Activated CD8-positive, alpha-beta T cell treated with anti-CD3 and anti-CD28 coated beads for 36 hours (primary cell): ENCODE measurements at regions of chr6 and their contacts with region 1.

Region 1: GRCh38 chr6:722077-722524 is 29.2 kb upstream of the EXOC2 start:
- DNase-seq: peak; percentile 88
- ATAC-seq: peak; percentile 86
- H3K4me3 Mint-ChIP-seq: no peak overlapping the region
- H3K27ac Mint-ChIP-seq: no peak overlapping the region
- H3K4me1 Mint-ChIP-seq: peaks cover 3% of the 10 kb centered on the region
- H3K27me3 Mint-ChIP-seq: peaks cover 7% of the 10 kb centered on the region
- CTCF ChIP-seq: peak; percentile 89

Region 2: DNA sequence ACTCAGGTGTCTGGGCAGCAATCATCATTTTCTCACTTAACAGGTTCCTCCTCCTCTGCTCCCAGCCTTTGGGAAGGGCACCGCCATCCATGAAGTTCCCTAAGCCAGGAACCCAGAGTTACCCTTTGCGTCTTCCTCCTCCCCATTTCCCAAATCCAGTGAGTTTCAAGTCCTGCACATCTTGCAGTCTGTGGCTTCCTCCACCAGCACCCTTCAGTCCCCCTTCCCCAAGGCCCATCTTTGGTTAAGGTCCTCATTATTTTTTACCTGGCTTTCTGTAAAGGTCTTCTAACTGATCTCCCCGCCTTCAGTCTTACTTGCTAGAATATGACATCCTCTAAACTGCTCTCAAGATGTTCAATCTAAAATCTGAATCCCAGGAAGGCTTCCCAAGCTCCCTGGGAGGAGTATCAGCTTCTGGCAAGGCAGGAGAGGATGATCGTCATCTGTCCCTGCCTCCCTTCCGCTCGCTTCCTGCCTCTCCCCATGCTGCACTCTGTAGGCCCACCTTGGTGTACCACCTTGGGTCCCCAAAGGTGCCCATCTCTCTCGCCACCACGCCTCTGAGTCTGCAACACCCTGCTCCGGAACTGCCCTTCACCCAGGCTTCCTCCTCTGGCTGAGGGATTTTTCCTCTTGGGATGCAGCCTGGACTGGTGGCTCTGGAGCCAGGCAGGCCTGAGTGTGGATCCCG is 441.2 kb before region 1 on chr6:
- CTCF ChIA-PET with region 1: no interaction called
- POLR2A ChIA-PET with region 1: no interaction called
- intact Hi-C with region 1: no loop called
- DNase-seq: no peak
- ATAC-seq: no peak
- H3K4me3 Mint-ChIP-seq: no peak overlapping the region
- H3K27ac Mint-ChIP-seq: no peak overlapping the region
- H3K4me1 Mint-ChIP-seq: peaks cover 14% of the 10 kb centered on the region
- H3K27me3 Mint-ChIP-seq: no peaks in the 10 kb centered on the region
- CTCF ChIP-seq: no peak

Region 3: GRCh38 chr6:624979-625378 is 97.1 kb before region 1 on chr6:
- CTCF ChIA-PET with region 1: interaction called, 10 read pairs
- POLR2A ChIA-PET with region 1: no interaction called
- intact Hi-C with region 1: no loop called
- DNase-seq: no peak
- ATAC-seq: no peak
- H3K4me3 Mint-ChIP-seq: no peak overlapping the region
- H3K27ac Mint-ChIP-seq: no peak overlapping the region
- H3K4me1 Mint-ChIP-seq: peaks cover 16% of the 10 kb centered on the region
- H3K27me3 Mint-ChIP-seq: no peaks in the 10 kb centered on the region
- CTCF ChIP-seq: no peak

Region 4: DNA sequence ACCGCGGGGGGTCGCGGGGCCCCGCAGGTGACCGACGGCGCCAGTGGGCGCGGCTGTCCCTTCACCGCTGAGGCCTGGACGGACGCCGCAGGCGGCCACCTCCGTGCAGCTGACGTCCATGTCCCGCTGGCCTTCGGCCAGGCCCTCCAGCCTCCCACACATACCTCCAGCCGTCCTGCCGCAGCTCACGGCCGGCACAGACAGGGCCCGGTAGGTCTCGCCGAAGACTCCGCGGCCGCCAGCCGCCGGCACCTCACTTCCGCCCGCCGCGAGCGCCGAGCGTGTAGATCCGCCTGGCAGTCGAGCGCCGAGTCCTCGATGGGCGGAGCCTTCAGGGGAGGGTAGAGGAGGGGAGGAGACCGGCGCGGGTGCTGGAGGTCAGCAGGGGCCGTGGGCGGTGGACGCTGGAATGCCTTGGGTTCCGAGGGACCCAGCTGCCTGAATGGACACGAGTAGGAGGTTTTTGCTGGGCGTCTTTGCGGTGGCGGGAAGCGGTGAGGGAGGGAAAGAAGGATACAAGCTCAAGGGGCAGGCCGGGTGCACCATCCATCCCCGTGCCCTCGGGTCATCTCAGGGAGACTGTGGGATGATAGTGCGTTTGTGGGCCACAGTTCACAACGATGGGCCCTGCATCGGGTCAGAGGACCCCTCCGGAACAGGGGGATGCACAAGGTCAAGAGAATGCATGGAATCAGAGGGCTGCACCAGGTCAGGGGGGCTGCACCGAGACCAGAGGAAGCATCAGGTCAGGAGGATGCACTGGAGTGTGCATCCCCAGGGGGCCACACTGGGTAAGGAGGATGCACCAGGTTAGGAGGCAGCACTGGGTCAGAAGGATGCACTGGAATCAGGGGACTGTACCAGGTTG is 29.0 kb before region 1 on chr6 and contains the start of gene EXOC2:
- CTCF ChIA-PET with region 1: interaction called, 11 read pairs
- POLR2A ChIA-PET with region 1: no interaction called
- intact Hi-C with region 1: no loop called
- DNase-seq: peak; percentile 90
- ATAC-seq: peak; percentile 86
- H3K4me3 Mint-ChIP-seq: peak within 1 kb of the TSS; percentile 85
- H3K27ac Mint-ChIP-seq: peak within 1 kb of the TSS; percentile 89
- H3K4me1 Mint-ChIP-seq: peaks cover 29% of the 10 kb centered on the region
- H3K27me3 Mint-ChIP-seq: no peaks in the 10 kb centered on the region
- CTCF ChIP-seq: no peak
- total RNA-seq, gene EXOC2: 29.9 to 30.2 TPM

Region 5: GRCh38 chr6:710601-711571 is 11.2 kb before region 1 on chr6:
- CTCF ChIA-PET with region 1: interaction called, 43 read pairs
- POLR2A ChIA-PET with region 1: no interaction called
- intact Hi-C with region 1: no loop called
- DNase-seq: peak; percentile 70
- ATAC-seq: peak; percentile 89
- H3K4me3 Mint-ChIP-seq: peak overlapping the region; percentile 88
- H3K27ac Mint-ChIP-seq: peak overlapping the region; percentile 98
- H3K4me1 Mint-ChIP-seq: peaks cover 24% of the 10 kb centered on the region
- H3K27me3 Mint-ChIP-seq: peaks cover 11% of the 10 kb centered on the region
- CTCF ChIP-seq: no peak

Region 6: DNA sequence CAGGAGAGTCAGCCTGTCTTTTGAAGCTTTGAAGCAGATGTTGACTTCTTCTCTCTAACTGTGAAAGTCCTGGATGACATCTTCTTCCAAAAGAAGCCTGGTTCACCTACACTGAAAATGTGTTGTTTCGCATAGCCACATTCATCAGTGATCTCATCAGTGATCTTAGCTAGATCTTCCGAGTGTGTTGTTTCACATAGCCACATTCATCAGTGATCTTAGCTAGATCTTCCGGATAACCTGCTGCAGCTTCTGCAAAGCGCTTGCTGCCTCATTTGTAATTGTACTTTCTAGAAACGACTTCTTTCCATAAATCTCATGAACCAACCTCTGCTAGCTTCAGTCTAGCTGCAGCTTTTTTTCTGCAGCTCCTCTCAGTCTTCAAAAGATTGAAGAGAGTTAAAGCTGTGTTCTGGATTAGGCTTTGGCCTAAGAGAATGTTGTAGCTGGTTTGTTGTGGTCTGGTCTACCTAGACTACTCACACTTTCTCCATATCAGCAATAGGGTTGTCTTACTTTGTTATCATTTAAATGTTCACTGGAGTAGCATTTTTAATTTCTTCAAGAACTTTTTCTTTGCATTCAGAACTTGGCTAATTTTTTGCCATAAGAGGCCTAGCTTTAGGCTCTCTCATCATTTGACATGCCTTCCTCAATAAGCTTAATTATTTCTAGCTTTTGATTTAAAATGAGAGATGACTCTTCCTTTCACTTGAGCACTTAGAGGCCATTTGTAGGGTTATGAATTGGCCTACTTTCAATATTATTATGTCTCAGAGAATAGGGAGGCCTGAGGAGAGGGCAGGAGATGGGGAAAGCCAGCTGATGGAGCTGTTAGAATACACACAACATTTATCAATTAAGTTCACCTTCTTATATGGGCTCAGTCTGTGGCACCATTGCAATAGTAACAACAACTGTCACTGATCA is 19.6 kb after region 1 on chr6:
- CTCF ChIA-PET with region 1: interaction called, 16 read pairs
- POLR2A ChIA-PET with region 1: no interaction called
- intact Hi-C with region 1: no loop called
- DNase-seq: no peak
- ATAC-seq: no peak
- H3K4me3 Mint-ChIP-seq: no peak overlapping the region
- H3K27ac Mint-ChIP-seq: no peak overlapping the region
- H3K4me1 Mint-ChIP-seq: peaks cover 3% of the 10 kb centered on the region
- H3K27me3 Mint-ChIP-seq: peaks cover 7% of the 10 kb centered on the region
- CTCF ChIP-seq: no peak

Region 7: GRCh38 chr6:903761-904160 is 181.7 kb after region 1 on chr6:
- CTCF ChIA-PET with region 1: no interaction called
- POLR2A ChIA-PET with region 1: no interaction called
- intact Hi-C with region 1: no loop called
- DNase-seq: no peak
- ATAC-seq: no peak
- H3K4me3 Mint-ChIP-seq: no peak overlapping the region
- H3K27ac Mint-ChIP-seq: no peak overlapping the region
- H3K4me1 Mint-ChIP-seq: no peaks in the 10 kb centered on the region
- H3K27me3 Mint-ChIP-seq: peaks cover 5% of the 10 kb centered on the region
- CTCF ChIP-seq: no peak

Region 8: GRCh38 chr6:1436334-1437306 is 714.5 kb after region 1 on chr6:
- CTCF ChIA-PET with region 1: interaction called, 10 read pairs
- POLR2A ChIA-PET with region 1: no interaction called
- intact Hi-C with region 1: no loop called
- DNase-seq: peak; percentile 61
- ATAC-seq: peak; percentile 87
- H3K4me3 Mint-ChIP-seq: no peak overlapping the region
- H3K27ac Mint-ChIP-seq: no peak overlapping the region
- H3K4me1 Mint-ChIP-seq: no peaks in the 10 kb centered on the region
- H3K27me3 Mint-ChIP-seq: peaks cover 39% of the 10 kb centered on the region
- CTCF ChIP-seq: peak; percentile 77